K562 (cell line): ENCODE measurements at regions of chr14 and their contacts with region 1.

Region 1: DNA sequence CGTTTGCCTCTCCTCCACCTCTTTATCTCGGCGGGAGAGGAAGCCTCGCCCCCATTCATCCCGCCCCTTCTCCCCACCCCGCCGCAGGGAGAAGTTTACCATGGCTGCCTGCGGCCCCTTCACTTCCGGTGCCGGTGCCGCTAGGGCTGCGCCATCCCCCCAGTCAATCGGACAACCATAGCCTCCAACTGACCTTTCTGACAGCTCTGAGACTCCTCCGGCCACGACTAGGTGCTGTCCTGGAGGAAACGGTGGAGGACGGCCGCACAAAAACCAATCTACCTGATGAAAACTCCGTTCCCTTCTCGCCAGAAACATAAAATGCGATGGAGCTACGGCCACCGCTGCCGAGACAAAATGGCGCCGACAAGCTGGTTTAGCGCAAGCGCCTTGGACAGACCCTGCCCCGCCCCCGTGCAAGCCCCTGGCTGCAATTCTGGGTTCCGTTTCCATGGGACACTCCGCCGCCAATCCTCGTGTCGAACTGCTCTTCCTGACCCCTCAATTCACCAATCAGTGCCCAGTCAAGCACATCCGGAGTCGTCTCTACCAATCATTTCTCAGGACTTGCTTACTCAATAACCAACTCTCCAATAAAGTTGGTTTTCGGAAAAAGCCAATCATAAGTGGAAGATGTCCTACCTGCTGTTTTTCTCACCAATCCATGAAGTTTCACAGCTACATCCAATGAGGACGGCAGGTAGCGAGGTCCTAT is 436 bp upstream of the ARID4A start:
- DNase-seq: peak; percentile 72 to 97 (median 86)
- ATAC-seq: peak; percentile 88
- H3K4me3 ChIP-seq: peak overlapping the region; percentile 74
- H3K27ac ChIP-seq: peak overlapping the region; percentile 99
- H3K4me1 ChIP-seq: no peaks in the 10 kb centered on the region; a peak in 3 of 5 replicates
- H3K27me3 ChIP-seq: no peaks in the 10 kb centered on the region
- CTCF ChIP-seq: no peak
- EP300 ChIP-seq: no peak
- POLR2A ChIP-seq: peak; percentile 96
- RAD21 ChIP-seq: no peak

Region 2: GRCh38 chr14:58199726-58200479 is 98.0 kb before region 1 on chr14 and contains the start of gene ACTR10:
- CTCF ChIA-PET with region 1: no interaction called
- POLR2A ChIA-PET with region 1: interaction called, 3 read pairs
- in situ Hi-C with region 1: no loop called
- intact Hi-C with region 1: loop called (anchors 5 kb)
- DNase-seq: peak; percentile 84 to 93 (median 85)
- ATAC-seq: peak; percentile 95
- H3K4me3 ChIP-seq: peak within 1 kb of the TSS; percentile 69
- H3K27ac ChIP-seq: peak within 1 kb of the TSS; percentile 79
- H3K4me1 ChIP-seq: peaks cover 0 to 10% of the 10 kb centered on the region in 2 experiments; a peak in 3 of 5 replicates
- H3K27me3 ChIP-seq: no peaks in the 10 kb centered on the region
- CTCF ChIP-seq: no peak
- EP300 ChIP-seq: no peak
- POLR2A ChIP-seq: peak; percentile 71; the same call in 1 of the 2 replicates
- RAD21 ChIP-seq: no peak
- polyA plus RNA-seq, gene ACTR10: 28.6 to 38.1 TPM

Region 3: GRCh38 chr14:58244556-58245387 is 53.1 kb before region 1 on chr14 and contains the start of gene PSMA3:
- CTCF ChIA-PET with region 1: no interaction called
- POLR2A ChIA-PET with region 1: interaction called, 6 read pairs
- in situ Hi-C with region 1: no loop called
- intact Hi-C with region 1: loop called (anchors 5 kb)
- DNase-seq: peak; percentile 89 to 95 (median 92)
- ATAC-seq: peak; percentile 92
- H3K4me3 ChIP-seq: peak within 1 kb of the TSS; percentile 66
- H3K27ac ChIP-seq: peak within 1 kb of the TSS; percentile 93
- H3K4me1 ChIP-seq: peaks cover 0 to 11% of the 10 kb centered on the region in 2 experiments; a peak in 2 of 5 replicates
- H3K27me3 ChIP-seq: no peaks in the 10 kb centered on the region
- CTCF ChIP-seq: no peak
- EP300 ChIP-seq: no peak
- POLR2A ChIP-seq: peak; percentile 89
- RAD21 ChIP-seq: no peak
- polyA plus RNA-seq, gene PSMA3: 667 to 786 TPM

Region 4: DNA sequence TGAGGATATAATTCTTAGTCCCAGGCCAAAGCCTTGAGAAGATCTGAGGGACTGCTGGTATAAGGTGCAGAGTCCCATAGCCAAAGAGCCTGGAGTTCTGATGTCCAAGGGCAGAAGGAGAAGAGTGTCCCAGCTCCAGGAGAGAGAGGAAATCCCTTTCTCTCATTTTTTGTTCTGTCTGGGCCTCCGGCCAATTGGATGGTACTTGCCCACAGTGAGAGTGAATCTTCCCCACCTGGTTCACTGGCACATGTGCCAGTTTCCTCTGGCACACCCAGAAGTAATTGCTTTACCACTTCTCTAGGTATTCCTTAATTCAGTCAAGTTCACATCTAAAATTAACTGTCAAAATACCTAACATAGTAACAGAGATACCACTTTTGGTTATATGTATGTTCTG is 15.8 kb after region 1 on chr14:
- CTCF ChIA-PET with region 1: no interaction called
- POLR2A ChIA-PET with region 1: interaction called, 13 read pairs
- in situ Hi-C with region 1: no loop called
- intact Hi-C with region 1: no loop called
- DNase-seq: no peak
- ATAC-seq: no peak
- H3K4me3 ChIP-seq: no peak overlapping the region
- H3K27ac ChIP-seq: no peak overlapping the region
- H3K4me1 ChIP-seq: no peaks in the 10 kb centered on the region
- H3K27me3 ChIP-seq: no peaks in the 10 kb centered on the region
- CTCF ChIP-seq: no peak
- EP300 ChIP-seq: no peak
- POLR2A ChIP-seq: no peak
- RAD21 ChIP-seq: no peak

Region 5: GRCh38 chr14:58427281-58428117 is 129.6 kb after region 1 on chr14 and contains the starts of genes KIAA0586 and TIMM9:
- CTCF ChIA-PET with region 1: no interaction called
- POLR2A ChIA-PET with region 1: no interaction called
- in situ Hi-C with region 1: no loop called
- intact Hi-C with region 1: loop called (anchors 2 kb)
- DNase-seq: peak; percentile 84 to 97 (median 89)
- ATAC-seq: peak; percentile 93
- H3K4me3 ChIP-seq: peak within 1 kb of the TSS; percentile 70
- H3K27ac ChIP-seq: peak within 1 kb of the TSS; percentile 100
- H3K4me1 ChIP-seq: peaks cover 3 to 7% of the 10 kb centered on the region in 2 experiments; a peak in 4 of 5 replicates
- H3K27me3 ChIP-seq: no peaks in the 10 kb centered on the region
- CTCF ChIP-seq: no peak
- EP300 ChIP-seq: peak; percentile 96
- POLR2A ChIP-seq: peak; percentile 77
- RAD21 ChIP-seq: no peak
- polyA plus RNA-seq, gene KIAA0586: 11.2 to 14.7 TPM
- polyA plus RNA-seq, gene TIMM9: 84.3 to 89.4 TPM

Region 6: GRCh38 chr14:59189786-59190771 is 892.2 kb after region 1 on chr14:
- CTCF ChIA-PET with region 1: no interaction called
- POLR2A ChIA-PET with region 1: no interaction called
- in situ Hi-C with region 1: no loop called
- intact Hi-C with region 1: loop called (anchors 5 kb)
- DNase-seq: peak; percentile 68 to 73 (median 70)
- ATAC-seq: peak; percentile 42
- H3K4me3 ChIP-seq: peak overlapping the region; percentile 91
- H3K27ac ChIP-seq: no peak overlapping the region; the same call in 2 of the 3 replicates
- H3K4me1 ChIP-seq: peaks cover 14 to 16% of the 10 kb centered on the region in 2 experiments; a peak in 4 of 5 replicates
- H3K27me3 ChIP-seq: no peaks in the 10 kb centered on the region
- CTCF ChIP-seq: no peak
- EP300 ChIP-seq: no peak
- POLR2A ChIP-seq: no peak
- RAD21 ChIP-seq: no peak